Activated CD4-positive, alpha-beta memory T cell treated with anti-CD3 and anti-CD28 coated beads for 36 hours (primary cell): ENCODE measurements at regions of chr1 and their contacts with region 1.

Region 1: GRCh38 chr1:55375617-55376258 is 160.6 kb upstream of the USP24 start:
- DNase-seq: peak; percentile 25
- H3K4me3 Mint-ChIP-seq: no peak overlapping the region
- H3K27ac Mint-ChIP-seq: no peak overlapping the region
- H3K4me1 Mint-ChIP-seq: peaks cover 2% of the 10 kb centered on the region
- H3K27me3 Mint-ChIP-seq: peaks cover 2% of the 10 kb centered on the region

Region 2: DNA sequence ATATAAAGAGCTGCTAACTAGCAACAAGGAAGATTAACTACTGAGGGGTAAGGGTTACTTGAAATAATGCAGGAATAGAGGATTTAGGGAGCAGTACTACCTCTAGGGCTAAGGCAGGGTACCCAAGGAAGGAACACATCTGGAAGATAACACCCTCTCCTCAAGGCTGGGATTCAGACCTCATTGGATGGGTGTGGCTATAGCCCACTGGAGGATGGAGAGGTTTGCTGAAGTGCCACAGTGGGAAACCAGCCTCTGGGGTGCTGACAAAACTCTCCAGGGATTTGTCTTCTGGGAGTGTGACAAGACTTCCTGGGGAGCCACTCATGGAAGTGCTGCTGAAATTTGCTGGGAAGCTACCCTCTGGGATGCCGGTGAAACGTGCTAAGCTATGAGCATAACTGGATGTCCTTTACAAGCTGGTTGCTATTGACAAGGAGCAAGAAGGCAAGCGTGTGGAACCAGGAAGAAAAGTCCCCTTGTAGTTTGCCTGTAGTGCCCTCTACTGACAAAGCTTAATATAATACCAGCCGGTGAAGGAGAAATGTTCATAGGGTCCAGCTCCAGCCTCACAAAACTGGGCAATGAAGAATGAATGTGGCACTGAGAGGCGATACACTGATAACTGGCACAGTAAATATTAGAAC is 37.8 kb before region 1 on chr1:
- CTCF ChIA-PET with region 1: interaction called, 13 read pairs
- POLR2A ChIA-PET with region 1: no interaction called
- intact Hi-C with region 1: no loop called
- DNase-seq: peak; percentile 25
- H3K4me3 Mint-ChIP-seq: no peak overlapping the region
- H3K27ac Mint-ChIP-seq: no peak overlapping the region
- H3K4me1 Mint-ChIP-seq: no peaks in the 10 kb centered on the region
- H3K27me3 Mint-ChIP-seq: peaks cover 2% of the 10 kb centered on the region

Region 3: DNA sequence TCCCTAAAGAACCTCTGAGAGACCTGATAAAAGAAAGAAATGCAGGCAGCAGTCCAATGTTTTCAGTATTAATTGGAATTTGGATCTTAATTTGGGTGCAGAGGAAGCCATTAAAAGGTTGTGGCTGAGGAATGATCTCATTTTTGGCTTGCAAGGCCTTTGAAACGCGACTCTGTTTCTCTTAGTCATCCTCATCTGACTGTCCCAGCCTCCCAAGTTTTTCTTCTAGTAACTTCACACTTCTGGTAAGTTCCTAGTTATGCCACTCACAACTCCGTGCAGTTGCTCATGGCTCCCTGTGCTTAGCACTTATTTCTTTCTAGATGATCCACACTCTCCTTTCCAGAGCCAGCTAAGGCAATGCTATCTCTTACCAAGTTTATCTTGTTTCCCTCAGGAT is 13.2 kb before region 1 on chr1:
- CTCF ChIA-PET with region 1: interaction called, 14 read pairs
- POLR2A ChIA-PET with region 1: no interaction called
- intact Hi-C with region 1: no loop called
- DNase-seq: no peak
- H3K4me3 Mint-ChIP-seq: no peak overlapping the region
- H3K27ac Mint-ChIP-seq: peak overlapping the region; percentile 53
- H3K4me1 Mint-ChIP-seq: peaks cover 9% of the 10 kb centered on the region
- H3K27me3 Mint-ChIP-seq: peaks cover 14% of the 10 kb centered on the region

Region 4: DNA sequence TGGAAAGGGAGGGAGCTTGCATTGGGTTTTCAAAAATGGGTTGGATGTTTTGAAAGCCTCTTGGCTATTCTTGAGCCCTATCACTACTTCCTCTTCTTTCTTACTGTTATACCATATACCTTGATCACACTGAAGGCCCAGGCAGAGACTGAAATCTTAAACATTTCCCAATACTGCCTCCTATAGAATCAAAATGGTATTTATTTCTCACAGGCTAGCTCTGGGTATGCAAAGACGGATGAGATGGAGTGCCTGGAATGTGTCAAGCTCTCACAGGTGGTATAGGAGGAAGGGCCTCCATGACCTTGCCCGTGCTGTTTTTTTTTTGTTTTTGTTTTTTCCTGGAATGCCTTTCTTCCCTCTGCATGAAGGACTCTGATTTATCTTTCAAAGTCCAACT is 107.8 kb after region 1 on chr1:
- CTCF ChIA-PET with region 1: interaction called, 3 read pairs
- POLR2A ChIA-PET with region 1: no interaction called
- intact Hi-C with region 1: loop called (anchors 5 kb)
- DNase-seq: no peak
- H3K4me3 Mint-ChIP-seq: no peak overlapping the region
- H3K27ac Mint-ChIP-seq: no peak overlapping the region
- H3K4me1 Mint-ChIP-seq: no peaks in the 10 kb centered on the region
- H3K27me3 Mint-ChIP-seq: peaks cover 6% of the 10 kb centered on the region

Region 5: DNA sequence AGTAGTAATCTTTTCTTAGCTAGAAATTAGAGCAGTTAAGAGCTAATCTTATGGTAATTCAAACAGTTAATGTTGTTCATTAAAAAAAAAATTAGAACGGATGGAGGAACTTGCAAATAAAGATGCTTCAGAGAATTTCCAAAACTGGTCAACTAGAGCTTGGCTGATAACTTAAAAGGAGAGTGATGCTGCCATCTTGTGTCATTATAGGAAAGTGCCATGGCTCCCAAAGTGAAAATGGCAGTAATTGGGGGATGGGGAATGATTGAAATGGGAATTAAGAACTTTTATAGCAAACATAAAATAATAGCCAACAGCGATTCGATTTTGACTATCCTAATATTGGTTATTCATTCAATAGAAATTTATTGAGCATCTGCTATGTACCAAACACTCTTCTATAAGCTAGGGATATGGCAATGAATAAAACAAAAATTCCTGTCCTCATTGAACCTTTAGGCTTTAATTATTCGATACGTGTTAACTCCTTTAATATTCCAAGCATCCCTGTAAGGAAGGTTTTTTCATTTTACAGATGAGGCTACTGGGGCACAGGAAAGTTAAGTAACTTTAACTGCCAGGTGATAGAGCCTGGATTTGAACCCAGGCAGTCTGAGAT is 1209.3 kb after region 1 on chr1:
- CTCF ChIA-PET with region 1: interaction called, 10 read pairs
- POLR2A ChIA-PET with region 1: interaction called, 3 read pairs
- intact Hi-C with region 1: no loop called
- DNase-seq: no peak
- H3K4me3 Mint-ChIP-seq: no peak overlapping the region
- H3K27ac Mint-ChIP-seq: no peak overlapping the region
- H3K4me1 Mint-ChIP-seq: no peaks in the 10 kb centered on the region
- H3K27me3 Mint-ChIP-seq: peaks cover 13% of the 10 kb centered on the region

Region 6: GRCh38 chr1:56709269-56709880 is 1333.6 kb after region 1 on chr1:
- CTCF ChIA-PET with region 1: interaction called, 3 read pairs
- POLR2A ChIA-PET with region 1: no interaction called
- intact Hi-C with region 1: loop called (anchors 10 kb)
- DNase-seq: no peak
- H3K4me3 Mint-ChIP-seq: no peak overlapping the region
- H3K27ac Mint-ChIP-seq: no peak overlapping the region
- H3K4me1 Mint-ChIP-seq: no peaks in the 10 kb centered on the region
- H3K27me3 Mint-ChIP-seq: peaks cover 13% of the 10 kb centered on the region